HepG2 (cell line): ENCODE measurements at regions of chr2 and their contacts with region 1.

Region 1: GRCh38 chr2:85420536-85421259 is 2.2 kb downstream of the SH2D6 start:
- DNase-seq: peak; percentile 90
- ATAC-seq: peak; percentile 66
- H3K4me3 ChIP-seq: peak overlapping the region; percentile 41 to 97 (median 91)
- H3K27ac ChIP-seq: peak overlapping the region; percentile 83
- H3K4me1 ChIP-seq: peaks cover 58% of the 10 kb centered on the region
- H3K27me3 ChIP-seq: no peaks in the 10 kb centered on the region
- CTCF ChIP-seq: peak; percentile 100; the same call in 1 of the 2 replicates
- EP300 ChIP-seq: peak; percentile 46 to 74; a peak in 2 of 4 replicates
- POLR2A ChIP-seq: no peak
- RAD21 ChIP-seq: peak; percentile 100

Region 2: GRCh38 chr2:85327822-85328617 is 92.7 kb before region 1 on chr2 and contains the start of gene TGOLN2:
- CTCF ChIA-PET with region 1: no interaction called
- POLR2A ChIA-PET with region 1: interaction called, 9 read pairs
- in situ Hi-C with region 1: no loop called
- intact Hi-C with region 1: loop called (anchors 1 kb)
- DNase-seq: peak; percentile 89
- ATAC-seq: peak; percentile 84
- H3K4me3 ChIP-seq: peak within 1 kb of the TSS; percentile 80 to 90 (median 89)
- H3K27ac ChIP-seq: peak within 1 kb of the TSS; percentile 95
- H3K4me1 ChIP-seq: peaks cover 42% of the 10 kb centered on the region
- H3K27me3 ChIP-seq: no peaks in the 10 kb centered on the region; a peak in 1 of 5 replicates
- CTCF ChIP-seq: peak; percentile 47
- EP300 ChIP-seq: peak; percentile 35 to 43; a peak in 3 of 4 replicates
- POLR2A ChIP-seq: peak; percentile 99
- RAD21 ChIP-seq: peak; percentile 72
- total RNA-seq, gene TGOLN2: 62.5 and 99.6 TPM in 2 replicates

Region 3: DNA sequence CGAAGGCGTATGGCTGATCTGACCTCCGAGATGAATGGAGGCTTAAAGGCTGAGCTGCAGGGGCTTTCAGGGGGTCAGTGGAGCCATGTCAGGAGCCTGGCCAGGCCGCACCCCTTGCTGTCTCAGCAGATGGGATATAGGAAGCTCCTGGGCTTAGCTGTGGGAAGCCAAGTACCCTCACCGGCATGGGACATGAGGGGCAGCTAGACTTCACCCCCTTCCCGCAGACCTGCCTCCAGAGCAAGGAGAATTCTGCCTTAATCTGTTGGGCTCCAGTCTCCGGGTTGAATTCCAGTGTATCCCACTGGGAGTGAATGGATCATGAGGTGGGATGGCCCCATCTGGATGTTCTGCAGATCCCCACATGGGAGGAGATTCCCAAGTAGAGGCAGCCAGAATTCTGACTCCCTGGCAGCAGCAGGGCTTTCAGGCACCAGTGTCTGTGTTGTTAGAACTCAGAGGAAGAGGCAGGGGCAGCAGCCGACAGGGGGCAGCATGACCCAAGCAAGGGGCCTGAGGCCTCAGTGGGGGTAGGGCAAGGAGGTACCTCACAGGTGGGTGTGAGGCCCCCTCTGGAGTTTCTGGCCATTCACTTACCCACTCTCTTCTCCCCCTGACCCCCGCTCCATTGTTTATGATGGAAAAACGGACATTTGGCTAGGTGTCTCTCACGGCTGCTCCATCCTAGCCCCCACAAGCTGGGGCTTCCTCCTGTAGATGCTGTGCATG is 29.6 kb before region 1 on chr2:
- CTCF ChIA-PET with region 1: interaction called, 4 read pairs
- POLR2A ChIA-PET with region 1: interaction called, 3 read pairs
- in situ Hi-C with region 1: no loop called
- intact Hi-C with region 1: loop called (anchors 1 kb)
- DNase-seq: peak; percentile 59
- ATAC-seq: peak; percentile 92
- H3K4me3 ChIP-seq: no peak overlapping the region
- H3K27ac ChIP-seq: no peak overlapping the region
- H3K4me1 ChIP-seq: no peaks in the 10 kb centered on the region
- H3K27me3 ChIP-seq: no peaks in the 10 kb centered on the region
- CTCF ChIP-seq: peak; percentile 98
- EP300 ChIP-seq: no peak
- POLR2A ChIP-seq: no peak
- RAD21 ChIP-seq: peak; percentile 98

Region 4: DNA sequence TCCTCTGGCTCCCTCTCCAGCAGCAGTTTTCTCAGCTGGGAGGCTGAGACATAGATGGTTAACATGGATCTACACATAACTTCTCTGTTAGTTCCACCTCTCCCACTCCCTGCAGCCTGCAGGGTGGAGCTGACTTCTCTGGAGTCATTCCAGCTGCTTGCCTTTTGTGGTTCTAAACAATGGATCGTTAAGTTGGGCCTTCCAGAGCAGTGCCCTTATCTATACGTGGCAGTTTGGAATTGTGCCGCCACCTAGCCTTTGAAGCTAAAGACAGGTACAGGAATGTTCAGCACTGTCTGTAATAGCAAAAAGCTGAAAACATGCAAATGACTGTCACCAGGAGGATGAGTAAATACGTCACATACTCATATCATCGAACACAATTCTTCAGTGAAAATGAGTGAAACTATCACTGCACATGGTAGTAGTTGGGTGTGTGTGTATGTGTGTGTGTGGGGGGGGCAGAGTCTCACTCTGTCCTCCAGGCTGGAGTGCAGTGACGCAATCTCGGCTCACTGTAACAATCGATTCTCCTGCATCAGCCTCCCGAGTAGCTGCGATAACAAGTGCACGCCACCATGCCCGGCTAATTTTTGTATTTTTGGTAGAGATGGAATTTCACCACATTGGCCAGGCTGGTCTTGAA is 48.1 kb after region 1 on chr2:
- CTCF ChIA-PET with region 1: no interaction called
- POLR2A ChIA-PET with region 1: interaction called, 96 read pairs
- in situ Hi-C with region 1: loop called (anchors 5 kb)
- intact Hi-C with region 1: loop called (anchors 1 kb)
- DNase-seq: peak; percentile 97
- ATAC-seq: peak; percentile 80
- H3K4me3 ChIP-seq: peak overlapping the region in 2 of 3 experiments; percentile 29 to 44; a peak in 4 of 6 replicates
- H3K27ac ChIP-seq: peak overlapping the region; percentile 70
- H3K4me1 ChIP-seq: peaks cover 67% of the 10 kb centered on the region
- H3K27me3 ChIP-seq: no peaks in the 10 kb centered on the region
- CTCF ChIP-seq: peak; percentile 53
- EP300 ChIP-seq: 0 out of 4 replicates have a peak, but pooled peaks of 1 of the 2 experiments have one; percentile 43
- POLR2A ChIP-seq: no peak
- RAD21 ChIP-seq: peak; percentile 24; the same call in 1 of the 2 replicates

Region 5: GRCh38 chr2:85524336-85524933 is 103.7 kb after region 1 on chr2:
- CTCF ChIA-PET with region 1: no interaction called
- POLR2A ChIA-PET with region 1: interaction called, 15 read pairs
- in situ Hi-C with region 1: no loop called
- intact Hi-C with region 1: no loop called
- DNase-seq: no peak
- ATAC-seq: peak; percentile 89
- H3K4me3 ChIP-seq: peak overlapping the region in 2 of 3 experiments; percentile 4 to 8; a peak in 2 of 6 replicates
- H3K27ac ChIP-seq: no peak overlapping the region
- H3K4me1 ChIP-seq: peaks cover 29% of the 10 kb centered on the region
- H3K27me3 ChIP-seq: peaks cover 2 to 14% of the 10 kb centered on the region in 2 experiments; a peak in 3 of 5 replicates
- CTCF ChIP-seq: no peak
- EP300 ChIP-seq: no peak
- POLR2A ChIP-seq: no peak
- RAD21 ChIP-seq: no peak

Region 6: GRCh38 chr2:85584857-85585783 is 164.4 kb after region 1 on chr2:
- CTCF ChIA-PET with region 1: no interaction called
- POLR2A ChIA-PET with region 1: interaction called, 28 read pairs
- in situ Hi-C with region 1: no loop called
- intact Hi-C with region 1: no loop called
- DNase-seq: peak; percentile 96
- ATAC-seq: peak; percentile 88
- H3K4me3 ChIP-seq: peak overlapping the region; percentile 64 to 83 (median 65)
- H3K27ac ChIP-seq: peak overlapping the region; percentile 99
- H3K4me1 ChIP-seq: peaks cover 80% of the 10 kb centered on the region
- H3K27me3 ChIP-seq: no peaks in the 10 kb centered on the region
- CTCF ChIP-seq: no peak
- EP300 ChIP-seq: peak in 1 of 2 experiments; percentile 82; a peak in 2 of 4 replicates
- POLR2A ChIP-seq: peak; percentile 59 to 70; a peak in 3 of 4 replicates
- RAD21 ChIP-seq: no peak

Region 7: GRCh38 chr2:85611705-85612587 is 191.2 kb after region 1 on chr2 and contains the start of gene C2orf68:
- CTCF ChIA-PET with region 1: no interaction called
- POLR2A ChIA-PET with region 1: interaction called, 16 read pairs
- in situ Hi-C with region 1: no loop called
- intact Hi-C with region 1: loop called (anchors 5 kb)
- DNase-seq: peak; percentile 86
- ATAC-seq: peak; percentile 85
- H3K4me3 ChIP-seq: peak within 1 kb of the TSS; percentile 92 to 100 (median 95)
- H3K27ac ChIP-seq: peak within 1 kb of the TSS; percentile 58
- H3K4me1 ChIP-seq: peaks cover 69% of the 10 kb centered on the region
- H3K27me3 ChIP-seq: no peaks in the 10 kb centered on the region; a peak in 1 of 5 replicates
- CTCF ChIP-seq: no peak
- EP300 ChIP-seq: no peak
- POLR2A ChIP-seq: peak; percentile 52 to 90; a peak in 3 of 4 replicates
- RAD21 ChIP-seq: peak; percentile 63
- total RNA-seq, gene C2orf68: 47.1 and 49.0 TPM in 2 replicates

Region 8: DNA sequence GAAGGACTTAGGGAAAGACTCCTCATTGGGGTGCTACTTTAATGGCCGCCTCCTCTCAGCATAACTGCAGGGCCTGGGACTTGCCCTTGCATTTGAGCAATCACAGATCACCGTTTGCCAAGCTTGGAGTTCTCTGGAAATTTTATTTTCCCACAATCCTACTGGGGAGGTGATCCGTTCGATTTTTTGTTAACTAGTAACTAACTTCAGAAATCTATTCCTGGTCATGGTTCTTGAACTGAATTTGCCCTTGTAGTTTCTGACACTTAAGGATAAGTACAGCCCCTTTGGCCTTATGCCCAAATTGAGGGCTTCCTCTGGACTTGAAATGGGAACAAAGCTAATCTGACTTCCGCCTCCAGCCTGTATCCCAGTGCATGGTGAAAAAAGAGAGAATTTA is 528.6 kb after region 1 on chr2:
- CTCF ChIA-PET with region 1: no interaction called
- POLR2A ChIA-PET with region 1: no interaction called
- in situ Hi-C with region 1: no loop called
- intact Hi-C with region 1: no loop called
- DNase-seq: no peak
- ATAC-seq: peak; percentile 38
- H3K4me3 ChIP-seq: no peak overlapping the region
- H3K27ac ChIP-seq: no peak overlapping the region
- H3K4me1 ChIP-seq: peaks cover 43% of the 10 kb centered on the region
- H3K27me3 ChIP-seq: no peaks in the 10 kb centered on the region
- CTCF ChIP-seq: no peak
- EP300 ChIP-seq: no peak
- POLR2A ChIP-seq: no peak
- RAD21 ChIP-seq: no peak